Activated B cell treated with CpG ODN at 0.5 μM for 24 hours (primary cell): ENCODE measurements at regions of chr6 and their contacts with region 1.

Region 1: DNA sequence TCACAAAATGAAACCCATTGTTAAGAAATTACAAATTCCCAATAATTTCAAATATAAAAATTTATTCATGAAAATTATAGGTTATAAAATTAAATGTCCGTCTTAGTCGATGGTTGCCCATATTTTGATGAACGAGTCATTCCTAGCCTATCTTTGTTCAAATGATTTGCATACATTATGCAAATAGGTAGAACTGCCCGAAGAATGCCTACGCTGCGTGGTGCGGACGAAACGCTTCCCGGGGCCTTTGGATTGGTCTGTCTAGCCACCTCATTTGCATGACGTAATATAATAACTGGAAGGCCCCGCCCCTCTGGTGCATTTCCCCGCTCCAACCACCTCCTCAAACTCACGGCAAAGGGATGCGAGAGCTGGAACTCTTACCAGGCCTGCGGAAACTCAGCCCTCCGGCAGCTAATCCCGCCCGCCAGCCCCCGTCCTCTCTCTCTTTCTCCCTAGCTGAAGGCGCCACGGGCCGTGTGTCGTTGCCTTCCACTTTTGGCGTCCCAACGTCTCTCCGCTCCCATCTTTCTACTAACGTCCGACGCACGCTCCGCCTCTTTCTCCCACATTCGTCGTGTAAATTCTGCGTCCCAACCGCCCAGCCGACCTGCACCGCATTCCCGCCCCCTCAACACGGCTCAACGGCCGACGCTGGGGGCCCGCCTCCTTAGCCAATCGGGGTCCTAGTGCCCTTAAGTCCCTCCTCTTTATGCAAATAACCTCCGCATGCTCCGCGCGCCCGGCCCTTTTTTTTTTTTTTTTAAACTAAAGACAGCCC is 520 bp upstream of the PRRC2A start:
- DNase-seq: peak; percentile 87
- ATAC-seq: peak; percentile 84
- H3K4me3 Mint-ChIP-seq: peak overlapping the region; percentile 86
- H3K27ac Mint-ChIP-seq: peak overlapping the region; percentile 94
- H3K4me1 Mint-ChIP-seq: peaks cover 46% of the 10 kb centered on the region
- H3K27me3 Mint-ChIP-seq: no peaks in the 10 kb centered on the region
- CTCF ChIP-seq: no peak

Region 2: DNA sequence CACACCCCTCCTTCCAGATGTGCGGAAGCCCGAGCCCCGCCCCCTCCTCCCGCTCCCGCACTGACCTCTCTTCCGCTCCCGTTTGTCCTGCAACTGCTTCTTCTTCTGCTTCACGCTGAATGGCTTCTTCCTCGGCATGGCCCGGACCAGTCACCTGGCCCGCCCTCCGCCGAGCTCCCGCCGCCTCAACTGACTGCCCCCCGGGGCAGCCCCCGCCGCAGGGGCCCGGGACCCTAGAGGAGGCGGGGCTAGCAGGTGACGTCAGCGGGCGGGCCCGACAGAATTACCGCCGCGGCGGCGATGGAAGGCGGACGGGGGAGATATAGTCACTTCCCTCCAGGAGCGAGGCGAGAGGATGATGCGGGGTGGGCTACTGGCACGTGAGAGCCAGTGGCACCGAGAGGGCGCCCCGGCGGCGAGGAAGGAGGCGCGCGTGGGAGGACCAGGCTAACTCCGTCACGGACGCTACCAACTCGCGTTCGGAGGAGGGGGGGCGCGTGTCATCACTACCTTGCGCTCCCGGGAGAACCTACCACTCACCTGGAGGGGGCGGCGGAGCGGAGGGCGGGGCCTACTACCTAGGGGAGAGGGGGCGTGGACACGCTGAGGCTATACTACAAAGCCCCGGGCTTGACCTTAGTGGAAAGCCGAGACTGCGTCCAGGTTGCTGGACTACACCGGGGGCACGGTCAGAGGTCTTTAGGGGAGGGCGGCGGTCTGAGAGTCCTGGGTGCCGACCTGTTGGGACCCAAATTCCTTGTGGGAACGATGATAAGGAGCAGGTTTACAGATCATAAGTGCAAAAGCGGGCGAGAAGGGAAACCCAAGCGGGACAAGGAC is 1063.7 kb before region 1 on chr6 and contains the start of gene GNL1:
- CTCF ChIA-PET with region 1: no interaction called
- POLR2A ChIA-PET with region 1: no interaction called
- intact Hi-C with region 1: loop called (anchors 2 kb)
- DNase-seq: peak; percentile 99
- ATAC-seq: peak; percentile 89
- H3K4me3 Mint-ChIP-seq: peak within 1 kb of the TSS; percentile 94
- H3K27ac Mint-ChIP-seq: peak within 1 kb of the TSS; percentile 97
- H3K4me1 Mint-ChIP-seq: peaks cover 40% of the 10 kb centered on the region
- H3K27me3 Mint-ChIP-seq: no peaks in the 10 kb centered on the region
- CTCF ChIP-seq: no peak
- total RNA-seq, gene GNL1: 67.2 and 67.4 TPM in 2 replicates

Region 3: DNA sequence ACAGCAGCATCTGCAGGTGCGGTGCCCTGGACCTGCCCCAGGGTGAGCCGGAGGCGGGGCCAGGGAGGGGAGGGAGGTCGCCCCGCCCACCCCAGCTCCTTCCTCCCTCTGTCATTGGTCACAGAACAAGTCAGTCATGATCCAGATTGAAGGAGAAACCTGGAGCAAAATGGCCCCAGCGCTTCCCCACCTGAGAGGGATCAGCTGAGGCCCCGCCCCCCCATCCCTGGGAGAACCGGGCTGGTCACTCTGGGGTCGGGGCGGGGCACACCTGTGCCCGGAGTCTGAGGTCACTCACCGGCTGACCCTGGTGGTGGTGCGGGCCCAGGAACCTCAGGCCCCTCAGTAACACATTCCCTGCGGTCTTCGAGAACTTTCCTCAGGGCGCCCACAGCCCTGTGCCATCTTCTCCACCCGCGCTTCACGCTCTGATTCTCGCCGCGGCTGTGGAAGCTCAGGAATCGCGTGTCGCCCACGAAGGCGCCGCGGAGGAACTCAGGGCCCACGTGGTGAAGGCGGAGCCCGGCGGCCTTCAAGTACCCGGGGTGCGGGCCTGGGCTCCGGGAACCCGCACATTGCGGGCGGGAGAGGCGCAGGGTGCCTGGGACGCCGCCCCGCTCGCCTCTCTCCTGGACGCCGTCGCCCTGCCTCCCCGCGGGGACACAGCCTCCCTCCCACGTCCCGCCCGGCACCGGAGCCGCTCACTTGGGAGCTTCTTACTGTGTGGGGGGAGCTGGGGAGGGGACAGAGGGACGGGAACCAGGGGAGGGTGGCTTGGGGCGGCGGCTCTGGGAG is 311.7 kb before region 1 on chr6:
- CTCF ChIA-PET with region 1: no interaction called
- POLR2A ChIA-PET with region 1: no interaction called
- intact Hi-C with region 1: no loop called
- DNase-seq: peak; percentile 68
- ATAC-seq: peak; percentile 98
- H3K4me3 Mint-ChIP-seq: peak overlapping the region; percentile 88
- H3K27ac Mint-ChIP-seq: peak overlapping the region; percentile 59
- H3K4me1 Mint-ChIP-seq: peaks cover 2% of the 10 kb centered on the region
- H3K27me3 Mint-ChIP-seq: peaks cover 12% of the 10 kb centered on the region
- CTCF ChIP-seq: no peak

Region 4: DNA sequence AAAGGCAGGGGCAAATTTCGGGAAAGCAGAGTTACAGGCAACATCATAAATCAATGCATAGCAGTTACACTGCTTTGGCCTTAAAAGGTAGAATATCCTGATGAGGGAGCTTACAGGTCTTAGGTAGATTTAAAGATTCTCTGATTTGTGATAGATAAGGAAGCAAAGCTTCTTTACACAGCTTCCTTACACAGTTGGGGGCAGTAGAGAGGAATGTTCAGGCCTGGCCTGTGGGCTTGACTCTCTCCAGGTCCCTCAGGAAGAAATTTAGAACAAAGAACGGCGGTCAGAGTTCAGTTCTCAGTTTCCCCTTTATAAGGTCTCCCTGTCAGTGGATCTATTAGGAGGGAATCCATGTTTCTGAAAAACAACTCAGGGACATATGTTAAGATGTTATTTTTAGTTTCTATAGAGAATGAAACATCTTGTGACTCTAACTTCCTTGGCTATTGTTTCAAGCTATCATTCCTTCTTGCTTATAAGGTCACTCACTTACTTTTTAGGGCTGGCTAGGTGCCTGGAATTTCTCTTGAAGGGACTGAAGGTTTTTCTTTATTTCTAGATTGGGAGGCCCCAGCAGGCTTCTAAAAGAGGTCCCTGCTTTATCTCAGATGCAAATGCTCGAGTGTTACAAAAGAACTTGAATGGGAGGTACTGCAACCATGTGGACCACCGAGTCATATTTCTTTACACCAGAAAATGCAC is 274.8 kb before region 1 on chr6:
- CTCF ChIA-PET with region 1: no interaction called
- POLR2A ChIA-PET with region 1: no interaction called
- intact Hi-C with region 1: no loop called
- DNase-seq: no peak
- ATAC-seq: no peak
- H3K4me3 Mint-ChIP-seq: no peak overlapping the region
- H3K27ac Mint-ChIP-seq: no peak overlapping the region
- H3K4me1 Mint-ChIP-seq: peaks cover 8% of the 10 kb centered on the region
- H3K27me3 Mint-ChIP-seq: no peaks in the 10 kb centered on the region
- CTCF ChIP-seq: no peak

Region 5: DNA sequence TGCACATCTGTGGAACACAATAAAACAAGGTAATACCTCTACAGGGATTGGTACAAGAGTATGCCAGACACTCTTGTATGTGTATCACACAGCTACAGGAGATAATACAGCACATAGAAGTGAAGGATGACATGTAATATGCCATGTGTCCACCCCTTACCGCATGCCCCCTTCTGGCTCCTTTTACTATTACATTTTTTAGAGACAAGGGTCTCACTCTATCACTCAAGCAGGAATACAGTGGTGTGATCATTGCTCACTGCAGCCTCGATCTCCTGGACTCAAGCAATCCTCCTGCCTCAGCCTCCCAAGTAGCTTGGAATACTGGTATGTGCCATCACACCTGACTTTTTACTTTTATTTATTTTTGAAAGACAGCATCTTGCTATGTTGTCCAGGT is 23.0 kb before region 1 on chr6:
- CTCF ChIA-PET with region 1: interaction called, 17 read pairs
- POLR2A ChIA-PET with region 1: interaction called, 10 read pairs
- intact Hi-C with region 1: no loop called
- DNase-seq: no peak
- ATAC-seq: peak; percentile 73
- H3K4me3 Mint-ChIP-seq: peak overlapping the region; percentile 25
- H3K27ac Mint-ChIP-seq: peak overlapping the region; percentile 75
- H3K4me1 Mint-ChIP-seq: peaks cover 58% of the 10 kb centered on the region
- H3K27me3 Mint-ChIP-seq: no peaks in the 10 kb centered on the region
- CTCF ChIP-seq: no peak

Region 6: GRCh38 chr6:31795616-31796298 is 175.8 kb after region 1 on chr6 and contains the start of gene VARS1:
- CTCF ChIA-PET with region 1: no interaction called
- POLR2A ChIA-PET with region 1: interaction called, 3 read pairs
- intact Hi-C with region 1: loop called (anchors 1 kb)
- DNase-seq: peak; percentile 89
- ATAC-seq: peak; percentile 89
- H3K4me3 Mint-ChIP-seq: peak within 1 kb of the TSS; percentile 98
- H3K27ac Mint-ChIP-seq: peak within 1 kb of the TSS; percentile 98
- H3K4me1 Mint-ChIP-seq: peaks cover 65% of the 10 kb centered on the region
- H3K27me3 Mint-ChIP-seq: no peaks in the 10 kb centered on the region
- CTCF ChIP-seq: no peak
- total RNA-seq, gene VARS1: 136 and 140 TPM in 2 replicates

Region 7: DNA sequence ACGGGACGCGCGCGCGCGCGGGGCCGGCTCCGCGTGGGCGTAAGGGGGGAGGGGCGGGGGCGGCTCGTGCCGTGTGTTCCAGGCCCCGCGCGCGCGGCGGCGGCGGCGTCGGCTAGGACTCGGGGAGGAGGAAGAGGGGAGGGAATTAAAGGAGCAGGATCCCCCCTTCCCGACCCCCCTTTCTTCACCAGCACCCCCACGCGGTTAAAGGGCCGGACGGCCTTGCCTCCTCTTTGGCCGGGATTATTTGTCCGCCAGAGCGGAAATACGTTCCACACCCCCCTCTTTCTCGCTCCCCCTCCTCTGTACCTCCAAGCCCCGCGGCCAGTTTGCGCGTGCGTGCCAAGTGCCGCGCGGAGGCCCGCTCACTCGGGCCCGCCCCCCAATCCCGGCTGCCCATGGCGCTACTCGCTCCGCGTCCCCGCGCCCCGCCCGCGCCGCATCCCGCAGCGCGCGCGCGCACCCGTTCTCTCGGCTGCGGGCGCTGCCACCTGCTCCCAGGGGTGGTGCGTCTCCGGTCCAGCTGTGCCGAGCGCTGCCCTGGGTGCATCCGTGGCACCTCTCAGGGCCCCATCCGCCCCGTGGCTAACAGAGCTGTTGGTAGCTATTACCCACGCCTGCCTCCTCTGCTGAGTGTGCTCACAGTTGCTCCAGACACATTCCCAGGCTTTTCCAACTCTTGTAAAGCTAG is 282.1 kb after region 1 on chr6 and contains the start of gene ZBTB12:
- CTCF ChIA-PET with region 1: no interaction called
- POLR2A ChIA-PET with region 1: no interaction called
- intact Hi-C with region 1: loop called (anchors 2 kb)
- DNase-seq: peak; percentile 83
- ATAC-seq: peak; percentile 69
- H3K4me3 Mint-ChIP-seq: peak within 1 kb of the TSS; percentile 89
- H3K27ac Mint-ChIP-seq: peak within 1 kb of the TSS; percentile 86
- H3K4me1 Mint-ChIP-seq: peaks cover 27% of the 10 kb centered on the region
- H3K27me3 Mint-ChIP-seq: no peaks in the 10 kb centered on the region
- CTCF ChIP-seq: no peak
- total RNA-seq, gene ZBTB12: 4.8 and 5.5 TPM in 2 replicates

Region 8: DNA sequence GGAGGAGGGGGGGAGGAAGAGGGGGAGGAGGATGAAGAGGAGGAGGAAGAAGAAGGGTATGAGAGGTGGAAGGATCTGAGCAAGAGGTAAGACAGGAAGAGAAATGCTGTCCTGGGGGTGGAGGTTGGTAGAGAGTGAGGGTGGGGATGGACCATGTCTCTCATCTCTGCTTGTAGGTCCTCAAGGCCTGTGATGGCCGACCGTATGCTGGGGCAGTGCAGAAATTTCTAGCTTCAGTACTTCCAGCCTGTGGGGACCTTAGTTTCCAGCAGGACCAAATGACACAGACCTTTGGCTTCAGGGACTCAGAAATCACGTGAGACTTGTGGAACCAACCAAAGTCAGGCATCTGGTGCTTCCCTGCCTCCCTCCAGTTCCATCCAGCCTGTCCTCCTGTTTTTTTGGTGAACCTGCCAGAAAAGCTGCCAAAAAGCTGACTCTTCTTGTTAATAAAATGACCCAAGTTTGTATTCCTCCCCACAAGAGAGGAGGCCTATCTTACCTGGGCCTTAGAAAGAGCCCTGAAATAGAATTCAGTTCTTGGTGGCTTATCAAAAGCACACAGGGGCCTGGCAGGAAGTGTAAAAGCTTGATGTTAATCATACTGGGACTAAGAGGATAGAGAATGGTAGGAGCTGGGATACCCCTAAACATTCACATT is 359.4 kb after region 1 on chr6:
- CTCF ChIA-PET with region 1: no interaction called
- POLR2A ChIA-PET with region 1: no interaction called
- intact Hi-C with region 1: no loop called
- DNase-seq: no peak
- ATAC-seq: no peak
- H3K4me3 Mint-ChIP-seq: no peak overlapping the region
- H3K27ac Mint-ChIP-seq: no peak overlapping the region
- H3K4me1 Mint-ChIP-seq: no peaks in the 10 kb centered on the region
- H3K27me3 Mint-ChIP-seq: no peaks in the 10 kb centered on the region
- CTCF ChIP-seq: no peak